GM10248 (cell line): ENCODE measurements at regions of chr10 and their contacts with region 1.

Region 1: GRCh38 chr10:3197348-3198003 is 24.9 kb upstream of the PITRM1 start:
- DNase-seq: peak; percentile 77
- CTCF ChIP-seq: peak; percentile 84

Region 2: DNA sequence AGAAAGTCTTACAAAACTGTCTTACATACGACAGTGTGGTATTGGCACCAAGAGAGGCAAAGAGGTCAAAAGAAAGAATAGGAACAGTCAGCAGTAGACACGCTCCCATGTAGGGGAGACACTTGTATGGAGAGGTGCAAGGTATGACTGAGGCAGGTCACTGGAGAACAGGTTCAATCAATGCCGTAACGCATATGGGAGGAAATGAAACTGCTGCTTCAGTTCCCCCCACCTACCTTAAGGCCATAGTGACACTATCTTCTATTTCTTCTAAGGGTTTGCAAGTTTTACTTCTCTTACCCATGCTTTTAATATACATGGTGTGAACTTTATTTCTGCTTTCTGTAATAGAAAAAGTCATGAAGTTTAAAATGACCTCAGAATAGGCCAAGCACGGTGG is 19.4 kb before region 1 on chr10:
- CTCF ChIA-PET with region 1: interaction called, 29 read pairs
- POLR2A ChIA-PET with region 1: no interaction called
- DNase-seq: peak; percentile 49
- CTCF ChIP-seq: no peak

Region 3: GRCh38 chr10:4656576-4657182 is 1459.2 kb after region 1 on chr10:
- CTCF ChIA-PET with region 1: interaction called, 13 read pairs
- POLR2A ChIA-PET with region 1: no interaction called
- DNase-seq: peak; percentile 38
- CTCF ChIP-seq: peak; percentile 75

Region 4: GRCh38 chr10:4767033-4767814 is 1569.7 kb after region 1 on chr10:
- CTCF ChIA-PET with region 1: interaction called, 32 read pairs
- POLR2A ChIA-PET with region 1: no interaction called
- DNase-seq: no peak
- CTCF ChIP-seq: peak; percentile 42